ENCODE measurements at regions of chrX and their contacts with region 1.

Region 1: GRCh38 chrX:74550295-74550802 is 64.1 kb downstream of the RLIM start:
- DNase-seq: peak; percentile 53
- H3K4me3 ChIP-seq: no peak overlapping the region
- H3K27ac ChIP-seq: no peak overlapping the region
- H3K4me1 ChIP-seq: no peaks in the 10 kb centered on the region
- H3K27me3 ChIP-seq: no peaks in the 10 kb centered on the region
- CTCF ChIP-seq: peak; percentile 96

Region 2: GRCh38 chrX:73855546-73855945 is 694.8 kb before region 1 on chrX:
- CTCF ChIA-PET with region 1: no interaction called
- dilution Hi-C with region 1: no loop called
- in situ Hi-C with region 1: no loop called
- intact Hi-C with region 1: loop called (anchors 1 kb)
- DNase-seq: peak; percentile 60
- H3K4me3 ChIP-seq: no peak overlapping the region
- H3K27ac ChIP-seq: no peak overlapping the region
- H3K4me1 ChIP-seq: no peaks in the 10 kb centered on the region
- H3K27me3 ChIP-seq: no peaks in the 10 kb centered on the region
- CTCF ChIP-seq: peak; percentile 85 to 88

Region 3: DNA sequence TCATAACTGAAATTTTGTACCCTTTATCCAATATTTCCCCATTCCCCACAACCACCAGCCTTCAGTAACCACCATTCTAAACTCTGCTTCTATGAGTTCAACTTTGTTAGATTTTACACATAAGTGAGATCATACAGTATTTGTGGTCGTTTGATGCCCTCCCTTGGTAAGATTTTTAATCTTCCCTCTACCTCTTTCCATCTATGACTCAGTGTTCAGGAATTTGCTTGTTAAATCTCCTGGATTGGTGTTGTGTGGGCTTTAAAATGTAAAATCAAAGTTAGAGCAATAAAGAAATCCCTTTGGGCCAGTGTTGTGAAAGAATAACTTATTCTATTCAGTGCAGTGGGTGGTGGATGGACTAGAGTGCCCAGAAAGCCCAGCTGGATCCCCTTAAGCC is 91.6 kb before region 1 on chrX:
- CTCF ChIA-PET with region 1: no interaction called
- dilution Hi-C with region 1: no loop called
- in situ Hi-C with region 1: no loop called
- intact Hi-C with region 1: loop called (anchors 2 kb)
- DNase-seq: peak; percentile 67
- H3K4me3 ChIP-seq: no peak overlapping the region
- H3K27ac ChIP-seq: no peak overlapping the region
- H3K4me1 ChIP-seq: peaks cover 4% of the 10 kb centered on the region
- H3K27me3 ChIP-seq: no peaks in the 10 kb centered on the region
- CTCF ChIP-seq: peak; percentile 13 to 21

Region 4: DNA sequence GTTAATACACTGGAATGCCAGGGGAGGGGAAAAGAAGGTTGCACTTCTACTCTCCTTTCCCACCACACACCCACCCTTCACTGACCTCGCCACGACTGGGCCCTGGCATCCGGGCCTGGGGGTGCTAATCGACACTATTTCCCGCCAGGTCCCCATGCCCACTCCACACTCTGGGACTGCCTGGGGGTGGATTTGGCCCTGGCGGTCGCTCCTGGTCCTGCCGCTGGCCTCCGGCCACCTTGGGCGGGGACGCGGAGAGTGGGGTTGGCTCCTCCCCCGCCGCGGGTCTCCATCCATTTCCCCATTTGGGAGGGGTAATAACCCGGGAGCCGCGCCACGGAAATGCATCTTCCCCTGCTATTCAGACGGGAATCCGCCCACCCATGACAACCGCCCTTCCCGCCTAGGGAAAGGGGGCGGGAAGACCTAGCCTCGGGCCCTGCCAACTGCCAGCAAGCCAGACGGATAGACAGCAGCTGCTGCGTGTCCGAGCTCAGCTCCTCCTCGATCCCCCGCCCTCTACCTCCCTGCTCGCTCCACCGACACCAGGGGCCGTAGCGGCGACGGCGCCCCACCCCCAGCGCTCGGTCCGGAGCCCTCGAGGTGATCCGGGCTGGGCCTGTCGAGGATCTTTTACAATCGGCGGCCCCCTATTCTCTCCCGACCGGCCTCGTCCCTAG is 14.1 kb before region 1 on chrX:
- CTCF ChIA-PET with region 1: no interaction called
- dilution Hi-C with region 1: no loop called
- in situ Hi-C with region 1: no loop called
- intact Hi-C with region 1: loop called (anchors 1 kb)
- DNase-seq: peak; percentile 47
- H3K4me3 ChIP-seq: peak overlapping the region; percentile 27 to 42 (median 37)
- H3K27ac ChIP-seq: no peak overlapping the region
- H3K4me1 ChIP-seq: peaks cover 23% of the 10 kb centered on the region
- H3K27me3 ChIP-seq: no peaks in the 10 kb centered on the region
- CTCF ChIP-seq: peak; percentile 2 to 25

Region 5: GRCh38 chrX:75603833-75604232 is 1053.5 kb after region 1 on chrX:
- CTCF ChIA-PET with region 1: no interaction called
- dilution Hi-C with region 1: no loop called
- in situ Hi-C with region 1: no loop called
- intact Hi-C with region 1: loop called (anchors 5 kb)
- DNase-seq: peak; percentile 11
- H3K4me3 ChIP-seq: no peak overlapping the region
- H3K27ac ChIP-seq: no peak overlapping the region
- H3K4me1 ChIP-seq: no peaks in the 10 kb centered on the region
- H3K27me3 ChIP-seq: no peaks in the 10 kb centered on the region
- CTCF ChIP-seq: peak; percentile 55 to 67

Measured in mammary epithelial cell (primary cell).